Tibial artery (tissue), 4 donors: ENCODE measurements at regions of chr12 and their contacts with region 1.

Region 1: DNA sequence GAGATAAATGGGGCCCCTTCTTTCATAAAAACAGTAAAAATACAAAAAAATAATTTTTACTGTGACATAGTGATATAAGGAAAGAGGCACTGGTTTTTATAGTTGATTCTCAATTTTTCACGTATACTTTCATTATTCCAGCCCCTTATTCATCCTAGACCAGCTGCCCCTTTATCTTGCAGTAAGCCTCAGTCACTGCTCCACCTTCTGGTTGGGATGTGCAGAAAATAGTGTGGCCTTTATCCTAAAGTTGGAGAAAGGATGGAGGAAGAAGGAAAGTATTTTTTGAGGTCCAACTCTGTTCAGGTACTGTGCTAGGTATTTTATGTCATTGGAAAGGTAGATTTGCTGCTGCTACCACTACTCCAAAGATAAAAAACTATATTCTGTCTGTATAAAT is 172.7 kb downstream of the ANO6 start:
- DNase-seq: peak in 1 of 2 donors; percentile 34
- H3K4me3 ChIP-seq: no peak overlapping the region
- H3K27ac ChIP-seq: no peak overlapping the region
- H3K4me1 ChIP-seq: no peaks in the 10 kb centered on the region
- H3K27me3 ChIP-seq: no peaks in the 10 kb centered on the region
- CTCF ChIP-seq: peak; percentile 61 to 72

Region 2: GRCh38 chr12:45183246-45183645 is 205.3 kb before region 1 on chr12:
- intact Hi-C with region 1: loop called (anchors 5 kb)
- DNase-seq: no peak
- H3K4me3 ChIP-seq: no peak overlapping the region
- H3K27ac ChIP-seq: no peak overlapping the region
- H3K4me1 ChIP-seq: peaks cover 0 to 4% (median 0%) of the 10 kb centered on the region in 4 donors
- H3K27me3 ChIP-seq: no peaks in the 10 kb centered on the region
- CTCF ChIP-seq: peak; percentile 49 to 54

Region 3: DNA sequence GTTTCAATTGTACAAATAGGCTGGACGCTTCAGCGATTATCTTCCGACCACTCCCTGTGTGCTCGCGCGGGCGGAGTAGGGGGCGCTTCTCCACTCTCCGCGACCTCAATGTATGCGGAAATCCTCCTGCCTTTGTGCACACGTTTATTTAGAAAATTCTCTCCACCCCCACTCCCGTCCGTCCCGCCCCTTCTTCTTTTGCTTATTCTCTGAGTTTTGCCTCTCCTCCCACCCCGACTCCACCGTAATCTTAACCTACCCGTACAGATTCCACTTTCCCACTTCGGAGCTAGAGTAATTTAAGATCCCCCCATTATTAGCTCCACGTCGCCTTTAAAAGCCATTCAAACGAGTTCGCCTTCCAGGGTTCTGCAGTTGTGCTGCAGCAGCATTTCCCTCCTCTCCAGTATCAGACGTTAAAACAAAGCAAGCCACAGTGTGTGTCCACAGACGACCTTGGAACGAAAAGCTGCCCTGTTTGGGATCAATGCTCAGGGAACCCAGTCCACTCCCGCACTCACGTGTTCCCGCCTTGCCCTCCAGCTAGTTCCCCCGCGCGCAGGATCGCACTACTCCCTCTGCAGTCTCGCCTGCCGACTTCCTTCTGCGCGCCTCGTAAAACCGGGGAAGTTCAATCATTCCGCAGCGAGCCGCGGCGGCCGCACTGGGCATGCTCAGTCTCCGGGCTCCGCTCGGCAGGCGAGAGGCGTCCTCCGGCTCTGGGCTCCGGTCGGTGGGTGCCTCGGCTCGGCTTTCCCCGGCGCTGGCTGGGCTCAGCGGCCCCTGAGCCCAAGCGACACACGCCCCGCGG is 172.9 kb before region 1 on chr12 and contains the start of gene ANO6:
- intact Hi-C with region 1: loop called (anchors 10 kb)
- DNase-seq: peak; percentile 89 to 93
- H3K4me3 ChIP-seq: peak within 1 kb of the TSS; percentile 73 to 91
- H3K27ac ChIP-seq: peak within 1 kb of the TSS; percentile 92 to 97
- H3K4me1 ChIP-seq: peaks cover 0 to 28% (median 16%) of the 10 kb centered on the region in 4 donors
- H3K27me3 ChIP-seq: no peaks in the 10 kb centered on the region
- CTCF ChIP-seq: peak in 1 of 2 experiments; percentile 2

Region 4: DNA sequence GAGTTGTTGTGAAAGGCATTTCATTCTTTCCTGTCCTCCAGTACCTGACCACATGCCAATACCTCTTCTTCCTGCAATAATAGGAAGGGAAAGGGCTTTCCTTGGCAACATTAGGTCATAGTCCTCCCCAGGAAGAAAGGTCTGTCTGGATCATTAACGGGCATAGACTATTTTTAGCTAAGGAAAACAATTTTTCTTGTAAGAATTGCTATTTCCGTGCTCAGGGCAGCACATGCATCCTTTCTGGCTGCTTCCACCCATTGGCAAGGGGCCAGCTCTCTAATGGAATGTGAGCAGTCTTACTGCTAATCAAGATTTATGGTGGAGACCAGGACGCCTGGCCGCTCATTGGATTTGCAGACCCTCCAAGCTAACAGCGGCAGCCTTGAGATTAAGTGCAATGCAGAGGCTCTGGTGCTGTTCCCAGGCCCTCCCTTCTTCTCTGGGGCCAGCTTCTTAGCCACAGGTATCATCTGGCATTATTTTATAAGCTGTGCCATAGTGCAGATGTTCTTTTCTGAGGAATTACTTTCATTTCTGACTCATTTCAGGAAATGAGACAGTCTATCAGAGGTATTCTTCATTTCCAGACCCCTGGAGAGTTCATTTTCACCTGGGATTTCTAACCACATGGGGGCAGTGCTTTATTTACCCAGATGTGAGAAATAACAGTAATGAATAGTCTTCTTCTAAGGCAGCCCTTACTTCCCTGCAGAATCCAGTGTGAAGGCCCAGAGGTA is 119.7 kb before region 1 on chr12:
- intact Hi-C with region 1: loop called (anchors 10 kb)
- DNase-seq: peak; percentile 87 to 91
- H3K4me3 ChIP-seq: peak overlapping the region; percentile 27 to 35
- H3K27ac ChIP-seq: peak overlapping the region; percentile 63 to 77
- H3K4me1 ChIP-seq: peaks cover 0 to 97% (median 49%) of the 10 kb centered on the region in 4 donors
- H3K27me3 ChIP-seq: no peaks in the 10 kb centered on the region
- CTCF ChIP-seq: peak; percentile 41 to 49

Region 5: DNA sequence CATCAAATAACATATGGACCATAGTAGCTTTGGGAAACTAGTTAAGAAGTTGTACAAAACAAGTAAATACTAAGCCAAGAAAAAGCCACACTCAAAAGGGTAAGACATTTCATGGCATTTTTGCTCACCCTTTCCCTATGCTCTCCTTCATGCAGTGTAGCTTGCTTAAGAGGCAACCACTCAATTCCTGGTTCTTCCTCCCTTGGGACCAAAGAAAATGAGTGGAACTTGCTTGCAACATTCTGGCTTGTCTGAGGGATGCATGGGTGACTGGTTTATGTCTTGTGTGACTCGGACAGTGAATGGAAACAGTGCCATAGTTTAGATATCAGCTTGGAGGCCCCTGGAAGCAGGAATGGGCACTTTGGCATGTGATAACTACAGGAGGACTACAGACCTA is 89.0 kb after region 1 on chr12:
- intact Hi-C with region 1: no loop called
- DNase-seq: no peak
- H3K4me3 ChIP-seq: no peak overlapping the region
- H3K27ac ChIP-seq: no peak overlapping the region
- H3K4me1 ChIP-seq: peaks cover 0 to 5% (median 0%) of the 10 kb centered on the region in 4 donors
- H3K27me3 ChIP-seq: no peaks in the 10 kb centered on the region
- CTCF ChIP-seq: no peak